Ovary (tissue), 10 donors: ENCODE measurements at regions of chr1 and their contacts with region 1.

Region 1: DNA sequence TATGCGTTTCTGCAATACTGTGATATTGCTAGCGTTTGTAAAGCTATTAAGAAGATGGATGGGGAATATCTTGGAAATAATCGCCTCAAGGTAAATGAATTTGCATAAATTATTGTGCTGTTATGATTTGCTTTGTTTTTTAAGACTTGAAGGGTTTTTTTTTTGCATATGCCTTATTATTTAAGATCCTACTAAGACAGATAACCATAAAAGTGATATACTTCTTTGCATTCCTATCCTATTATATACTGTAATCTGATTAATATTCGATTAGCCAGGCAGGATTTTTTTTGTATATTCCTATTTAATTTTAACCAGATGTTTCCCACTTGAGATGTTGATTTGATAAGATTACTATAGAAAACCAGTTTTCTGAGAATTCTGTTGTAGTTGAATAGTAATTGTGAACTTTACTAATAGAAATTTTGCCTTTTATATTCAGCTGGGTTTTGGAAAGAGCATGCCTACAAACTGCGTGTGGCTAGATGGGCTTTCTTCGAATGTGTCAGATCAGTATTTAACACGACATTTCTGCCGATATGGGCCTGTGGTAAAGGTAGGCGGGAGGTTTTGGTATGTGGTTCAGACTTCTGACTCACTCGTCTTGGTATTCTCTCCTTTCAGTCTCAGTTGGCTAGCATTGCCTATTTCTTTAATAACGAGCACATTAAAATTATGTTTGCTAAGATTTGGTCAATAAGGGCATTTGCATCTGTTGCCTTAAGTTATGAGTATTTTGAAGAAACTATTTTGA is 56.8 kb downstream of the ZBTB17 start:
- DNase-seq: no peak
- H3K4me3 ChIP-seq: no peak overlapping the region
- H3K27ac ChIP-seq: no peak overlapping the region
- H3K4me1 ChIP-seq: peaks cover 4% of the 10 kb centered on the region
- H3K27me3 ChIP-seq: no peaks in the 10 kb centered on the region
- CTCF ChIP-seq: no peak
- EP300 ChIP-seq: no peak
- POLR2A ChIP-seq: no peak

Region 2: DNA sequence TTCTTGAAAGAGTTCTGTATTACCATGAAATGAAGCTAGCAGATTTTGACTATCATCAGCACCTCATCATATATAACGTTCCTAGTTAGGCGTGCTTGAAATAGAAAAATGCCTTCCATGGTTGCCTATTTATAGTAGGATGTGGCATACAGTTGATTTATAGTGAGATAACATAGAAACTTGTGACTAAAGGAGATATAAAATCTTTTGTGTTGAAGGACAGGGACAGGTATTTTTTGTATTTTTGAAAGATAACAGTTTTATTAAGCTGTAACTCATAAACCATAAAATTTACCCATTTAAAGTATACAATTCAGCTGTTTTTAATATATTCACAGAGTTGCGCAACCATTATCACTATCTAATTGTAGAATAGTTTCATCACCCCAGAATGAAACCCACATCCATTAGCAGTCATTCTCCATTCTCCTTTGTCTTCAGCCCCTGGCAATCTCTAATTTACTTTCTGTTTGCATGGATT is 52.4 kb before region 1 on chr1:
- intact Hi-C with region 1: no loop called
- DNase-seq: no peak
- H3K4me3 ChIP-seq: no peak overlapping the region
- H3K27ac ChIP-seq: no peak overlapping the region
- H3K4me1 ChIP-seq: peaks cover 7% of the 10 kb centered on the region
- H3K27me3 ChIP-seq: no peaks in the 10 kb centered on the region
- CTCF ChIP-seq: no peak
- EP300 ChIP-seq: no peak
- POLR2A ChIP-seq: no peak

Region 3: GRCh38 chr1:15935056-15935950 is 16.2 kb after region 1 on chr1:
- intact Hi-C with region 1: loop called in 1 of 4 experiments (anchors 2 kb)
- DNase-seq: peak in 1 of 5 donors; percentile 31
- H3K4me3 ChIP-seq: no peak overlapping the region
- H3K27ac ChIP-seq: no peak overlapping the region
- H3K4me1 ChIP-seq: peaks cover 9% of the 10 kb centered on the region
- H3K27me3 ChIP-seq: no peaks in the 10 kb centered on the region
- CTCF ChIP-seq: no peak
- EP300 ChIP-seq: no peak
- POLR2A ChIP-seq: no peak